ENCODE measurements at regions of chr21 and their contacts with region 1.

Region 1: DNA sequence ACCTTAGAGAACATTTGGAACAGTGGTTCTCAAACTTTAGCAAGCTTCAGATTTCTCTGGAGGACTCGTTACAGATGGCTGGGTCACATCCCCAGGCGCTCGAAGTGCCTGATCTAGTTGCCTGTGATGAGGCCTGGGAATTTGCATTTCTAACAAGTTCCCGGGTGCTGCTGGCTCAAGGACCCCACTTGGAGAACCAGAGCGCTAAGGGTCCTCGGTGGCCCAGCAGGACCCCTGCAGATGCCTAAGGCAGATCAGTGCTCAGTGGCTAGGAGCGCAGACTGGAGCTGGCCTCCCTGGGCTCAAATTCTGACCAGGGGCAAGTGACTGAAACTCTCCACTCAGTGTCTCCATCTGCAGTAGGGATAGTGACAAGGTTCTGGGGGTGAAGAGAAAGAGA is 208.2 kb downstream of the DYRK1A start:
- DNase-seq: no peak
- H3K4me3 Mint-ChIP-seq: no peak overlapping the region
- H3K27ac Mint-ChIP-seq: no peak overlapping the region
- H3K4me1 Mint-ChIP-seq: no peaks in the 10 kb centered on the region
- H3K27me3 Mint-ChIP-seq: peaks cover 10% of the 10 kb centered on the region

Region 2: GRCh38 chr21:37525810-37526209 is 48.9 kb before region 1 on chr21:
- CTCF ChIA-PET with region 1: no interaction called
- POLR2A ChIA-PET with region 1: no interaction called
- DNase-seq: no peak
- H3K4me3 Mint-ChIP-seq: no peak overlapping the region
- H3K27ac Mint-ChIP-seq: no peak overlapping the region
- H3K4me1 Mint-ChIP-seq: peaks cover 4% of the 10 kb centered on the region
- H3K27me3 Mint-ChIP-seq: peaks cover 10% of the 10 kb centered on the region

Region 3: GRCh38 chr21:37564341-37564920 is 10.3 kb before region 1 on chr21:
- CTCF ChIA-PET with region 1: interaction called, 11 read pairs
- POLR2A ChIA-PET with region 1: no interaction called
- DNase-seq: peak; percentile 84
- H3K4me3 Mint-ChIP-seq: peak overlapping the region; percentile 82
- H3K27ac Mint-ChIP-seq: peak overlapping the region; percentile 98
- H3K4me1 Mint-ChIP-seq: peaks cover 38% of the 10 kb centered on the region
- H3K27me3 Mint-ChIP-seq: peaks cover 2% of the 10 kb centered on the region

Region 4: DNA sequence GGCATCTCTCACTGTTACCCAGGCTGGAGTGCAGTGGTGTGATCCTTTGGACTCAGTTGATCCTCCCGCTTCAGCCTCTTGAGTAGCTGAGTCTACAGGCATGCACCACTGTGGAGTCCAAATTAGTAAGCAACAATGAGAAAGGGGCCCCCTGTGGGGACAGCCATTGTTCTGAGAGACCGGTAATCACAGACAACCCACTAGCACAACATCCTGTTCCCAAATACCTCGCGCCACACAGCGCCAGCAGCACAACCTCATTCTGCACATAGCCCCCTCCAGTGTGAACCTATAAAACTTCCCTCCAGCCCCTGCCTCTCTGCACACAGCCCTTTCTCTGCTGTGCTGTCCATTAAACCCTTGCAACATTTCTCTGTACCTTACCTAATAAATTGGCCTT is 18.3 kb after region 1 on chr21:
- CTCF ChIA-PET with region 1: no interaction called
- POLR2A ChIA-PET with region 1: no interaction called
- DNase-seq: no peak
- H3K4me3 Mint-ChIP-seq: no peak overlapping the region
- H3K27ac Mint-ChIP-seq: no peak overlapping the region
- H3K4me1 Mint-ChIP-seq: no peaks in the 10 kb centered on the region
- H3K27me3 Mint-ChIP-seq: no peaks in the 10 kb centered on the region